ENCODE measurements at regions of chr2 and their contacts with region 1.

Region 1: GRCh38 chr2:165953655-165954606 is at the start of gene TTC21B:
- DNase-seq: peak; percentile 92
- H3K4me3 Mint-ChIP-seq: peak within 1 kb of the TSS; percentile 54
- H3K27ac Mint-ChIP-seq: no peak within 1 kb of the TSS
- H3K4me1 Mint-ChIP-seq: peaks cover 11% of the 10 kb centered on the region
- H3K27me3 Mint-ChIP-seq: no peaks in the 10 kb centered on the region
- total RNA-seq, gene TTC21B: 21.0 and 24.6 TPM in 2 replicates

Region 2: GRCh38 chr2:165401285-165401852 is 552.6 kb before region 1 on chr2:
- intact Hi-C with region 1: loop called (anchors 5 kb)
- DNase-seq: no peak
- H3K4me3 Mint-ChIP-seq: no peak overlapping the region
- H3K27ac Mint-ChIP-seq: no peak overlapping the region
- H3K4me1 Mint-ChIP-seq: no peaks in the 10 kb centered on the region
- H3K27me3 Mint-ChIP-seq: peaks cover 27% of the 10 kb centered on the region

Region 3: DNA sequence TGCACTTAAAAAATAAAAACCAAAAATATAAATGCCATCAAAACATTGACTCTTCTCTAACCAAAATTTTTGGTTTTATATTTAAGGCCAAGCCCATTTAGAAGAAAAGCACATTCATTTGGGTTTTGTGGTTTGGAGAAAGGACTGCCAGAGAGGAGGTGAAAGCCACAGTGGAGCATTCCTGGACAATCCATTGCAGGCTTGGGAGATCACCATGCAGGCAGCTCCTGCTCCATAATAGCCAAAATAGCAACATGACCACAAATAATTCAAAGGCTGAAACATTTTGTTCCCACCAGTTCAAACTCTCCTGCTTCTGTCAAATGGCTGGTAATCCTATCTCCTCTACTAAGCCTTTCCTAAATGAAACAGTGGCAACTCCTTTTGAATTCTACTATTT is 233.4 kb before region 1 on chr2:
- intact Hi-C with region 1: no loop called
- DNase-seq: no peak
- H3K4me3 Mint-ChIP-seq: no peak overlapping the region
- H3K27ac Mint-ChIP-seq: no peak overlapping the region
- H3K4me1 Mint-ChIP-seq: no peaks in the 10 kb centered on the region
- H3K27me3 Mint-ChIP-seq: peaks cover 5% of the 10 kb centered on the region

Region 4: DNA sequence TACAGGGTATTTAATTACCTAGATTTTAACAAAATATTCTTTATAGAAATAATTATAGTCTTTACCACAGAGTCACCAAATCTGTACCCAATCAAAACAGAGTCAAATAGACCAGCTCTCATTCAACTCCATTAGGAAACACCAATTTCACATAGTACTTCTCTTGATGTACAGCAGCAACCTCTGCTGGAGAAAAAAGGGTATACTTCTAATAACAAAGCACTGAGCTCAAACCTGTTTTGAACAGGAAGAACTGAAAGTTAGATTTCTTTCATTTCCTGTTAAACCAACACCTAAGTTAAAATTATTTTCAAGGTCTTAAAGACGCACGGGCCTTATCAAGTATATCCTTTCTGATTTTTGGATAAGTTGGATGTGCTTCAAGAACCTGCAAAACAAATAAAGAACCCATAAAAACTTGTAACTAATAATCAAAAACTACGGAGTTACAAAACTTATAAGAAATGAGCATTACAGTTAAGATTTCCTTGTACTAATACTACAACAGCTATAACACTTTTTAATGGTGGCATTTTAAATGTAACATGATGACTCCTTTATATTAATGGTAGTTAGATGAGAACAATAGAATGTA is 79.4 kb before region 1 on chr2:
- intact Hi-C with region 1: loop called (anchors 2 kb)
- DNase-seq: peak; percentile 9
- H3K4me3 Mint-ChIP-seq: no peak overlapping the region
- H3K27ac Mint-ChIP-seq: no peak overlapping the region
- H3K4me1 Mint-ChIP-seq: peaks cover 34% of the 10 kb centered on the region
- H3K27me3 Mint-ChIP-seq: no peaks in the 10 kb centered on the region

Region 5: DNA sequence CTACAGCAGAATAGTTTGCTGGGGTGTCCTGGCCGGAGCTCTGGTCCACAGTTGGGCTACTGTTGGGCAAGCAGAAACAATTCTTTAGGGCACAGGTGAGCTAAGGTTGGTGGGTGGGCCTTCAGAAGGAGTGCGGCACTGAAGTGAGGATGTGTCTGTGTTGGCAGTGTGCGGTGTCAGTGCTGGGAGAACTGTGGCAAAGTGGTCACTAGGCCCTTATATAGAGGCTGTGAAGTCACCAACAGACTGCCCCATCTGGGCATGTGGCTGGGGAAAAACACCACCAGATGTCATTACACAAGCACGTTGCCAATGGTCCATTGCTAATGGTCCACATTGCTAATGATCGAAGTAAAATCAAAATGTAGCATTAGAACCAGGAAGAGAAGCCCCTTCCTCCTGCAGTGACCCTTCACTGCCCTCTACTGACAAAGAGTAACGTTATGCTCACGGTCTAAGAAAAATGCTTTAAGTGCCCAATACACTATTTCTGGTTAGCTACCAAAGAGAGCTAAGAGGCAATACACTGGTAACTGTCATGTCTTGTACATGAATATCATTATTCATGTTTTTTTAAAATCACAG is 152.6 kb after region 1 on chr2:
- intact Hi-C with region 1: loop called (anchors 5 kb)
- DNase-seq: no peak
- H3K4me3 Mint-ChIP-seq: no peak overlapping the region
- H3K27ac Mint-ChIP-seq: no peak overlapping the region
- H3K4me1 Mint-ChIP-seq: no peaks in the 10 kb centered on the region
- H3K27me3 Mint-ChIP-seq: no peaks in the 10 kb centered on the region

Region 6: GRCh38 chr2:166180951-166181812 is 227.3 kb after region 1 on chr2:
- intact Hi-C with region 1: loop called (anchors 1 kb)
- DNase-seq: no peak
- H3K4me3 Mint-ChIP-seq: no peak overlapping the region
- H3K27ac Mint-ChIP-seq: no peak overlapping the region
- H3K4me1 Mint-ChIP-seq: no peaks in the 10 kb centered on the region
- H3K27me3 Mint-ChIP-seq: no peaks in the 10 kb centered on the region

Measured in activated T-helper 1 cell treated with anti-CD3 and anti-CD28 coated beads, Interleukin-12 subunit alpha, Interleukin-12 subunit beta, Interleukin-2, Interleukin-4 antibody, amounts not matched to agents 30 ng/mL and 10 ng/mL and 1 ng/mL, durations not matched to agents 14 hours and 24 hours and 36 hours (primary cell).